ENCODE measurements at regions of chr12 and their contacts with region 1.

Region 1: GRCh38 chr12:105378911-105379310 is 48.4 kb downstream of the C12orf75 start:
- DNase-seq: no peak
- H3K4me3 ChIP-seq: no peak overlapping the region
- H3K27ac ChIP-seq: no peak overlapping the region
- H3K4me1 ChIP-seq: peaks cover 3 to 5% of the 10 kb centered on the region in 2 donors
- H3K27me3 ChIP-seq: no peaks in the 10 kb centered on the region
- CTCF ChIP-seq: no peak
- POLR2A ChIP-seq: no peak

Region 2: GRCh38 chr12:105100998-105101397 is 277.9 kb before region 1 on chr12:
- intact Hi-C with region 1: no loop called
- DNase-seq: no peak
- H3K4me3 ChIP-seq: no peak overlapping the region
- H3K27ac ChIP-seq: no peak overlapping the region
- H3K4me1 ChIP-seq: no peaks in the 10 kb centered on the region
- H3K27me3 ChIP-seq: no peaks in the 10 kb centered on the region
- CTCF ChIP-seq: no peak
- POLR2A ChIP-seq: no peak

Region 3: DNA sequence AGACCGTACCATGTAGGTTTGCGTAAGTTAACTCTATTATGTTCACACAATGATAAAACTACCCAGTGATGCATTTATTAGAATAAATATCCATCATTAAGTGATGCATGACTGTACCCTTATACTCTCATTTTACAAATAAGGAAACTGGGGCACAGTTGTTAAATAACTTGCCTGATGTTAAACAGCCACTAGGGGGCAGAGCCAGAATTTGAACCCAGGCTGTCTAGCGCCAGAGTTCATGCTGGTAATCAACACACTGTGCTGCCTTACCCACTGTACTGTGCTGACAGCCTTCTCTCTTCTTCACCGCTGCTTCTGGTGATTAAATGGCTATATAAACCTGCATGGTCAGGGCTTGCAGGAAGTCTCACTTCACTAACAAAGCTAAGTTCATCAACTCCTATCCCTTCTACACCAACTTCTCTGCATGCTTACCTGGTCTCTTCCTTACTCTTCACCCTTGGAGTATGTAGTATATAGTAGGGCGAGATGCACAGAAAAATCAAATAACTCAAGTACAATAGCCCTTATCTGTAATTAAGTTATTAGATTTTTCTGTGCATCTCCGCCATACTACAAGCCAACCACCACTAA is 99.4 kb before region 1 on chr12:
- intact Hi-C with region 1: loop called (anchors 10 kb)
- DNase-seq: peak; percentile 4 to 14
- H3K4me3 ChIP-seq: no peak overlapping the region
- H3K27ac ChIP-seq: no peak overlapping the region
- H3K4me1 ChIP-seq: no peaks in the 10 kb centered on the region
- H3K27me3 ChIP-seq: peaks cover 4% of the 10 kb centered on the region
- CTCF ChIP-seq: peak in 4 of 6 experiments; percentile 28 to 49 (median 46)
- POLR2A ChIP-seq: no peak

Measured in thyroid gland (tissue), 4 donors.